Right cardiac atrium (tissue), 5 donors: ENCODE measurements at regions of chr14 and their contacts with region 1.

Region 1: DNA sequence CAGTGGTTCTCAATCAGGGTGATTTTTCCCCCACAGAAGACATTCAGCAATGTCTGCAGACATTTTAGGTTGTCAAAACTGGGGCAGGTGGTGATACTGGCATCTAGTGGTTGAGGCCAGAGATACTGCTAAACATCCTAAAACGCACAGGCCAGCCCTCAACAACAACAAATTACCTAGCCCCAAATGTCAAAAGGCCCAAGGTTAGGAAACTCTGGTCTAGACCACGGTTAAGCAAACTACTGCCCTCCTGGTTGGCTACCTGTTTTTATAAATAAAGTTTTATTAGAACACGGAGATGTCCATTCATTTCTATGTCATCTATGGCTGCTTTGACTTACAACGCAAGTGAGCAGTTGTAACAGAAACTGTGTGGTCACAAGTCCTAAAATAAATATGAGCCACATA is 186.7 kb downstream of the EFCAB11 start:
- DNase-seq: no peak
- ATAC-seq: peak; percentile 47 to 73
- H3K4me3 ChIP-seq: no peak overlapping the region
- H3K27ac ChIP-seq: no peak overlapping the region
- H3K4me1 ChIP-seq: no peaks in the 10 kb centered on the region
- H3K27me3 ChIP-seq: no peaks in the 10 kb centered on the region

Region 2: DNA sequence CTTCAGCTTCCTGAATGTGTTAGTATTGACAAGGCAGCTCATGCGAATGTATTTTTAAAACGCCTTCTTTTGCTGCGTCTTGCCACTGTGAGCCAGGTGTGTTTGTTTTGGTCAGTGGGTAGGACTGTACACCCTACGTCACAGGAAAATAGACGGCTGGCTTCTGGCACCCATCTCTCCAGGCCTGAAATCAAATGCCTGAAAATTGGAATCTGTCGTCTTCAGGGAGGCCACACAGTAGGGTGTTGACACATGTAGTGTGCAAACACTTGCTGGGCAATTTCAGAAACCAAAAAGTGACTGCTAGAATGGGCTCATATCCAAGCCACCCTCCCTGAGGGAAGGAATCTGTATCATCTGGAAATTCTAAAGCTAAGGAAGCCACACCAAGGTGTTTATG is 734.1 kb before region 1 on chr14:
- intact Hi-C with region 1: loop called in 2 of 4 experiments (anchors 10 kb)
- DNase-seq: no peak
- ATAC-seq: peak in 1 of 2 donors; percentile 63
- H3K4me3 ChIP-seq: no peak overlapping the region
- H3K27ac ChIP-seq: no peak overlapping the region
- H3K4me1 ChIP-seq: no peaks in the 10 kb centered on the region
- H3K27me3 ChIP-seq: no peaks in the 10 kb centered on the region

Region 3: DNA sequence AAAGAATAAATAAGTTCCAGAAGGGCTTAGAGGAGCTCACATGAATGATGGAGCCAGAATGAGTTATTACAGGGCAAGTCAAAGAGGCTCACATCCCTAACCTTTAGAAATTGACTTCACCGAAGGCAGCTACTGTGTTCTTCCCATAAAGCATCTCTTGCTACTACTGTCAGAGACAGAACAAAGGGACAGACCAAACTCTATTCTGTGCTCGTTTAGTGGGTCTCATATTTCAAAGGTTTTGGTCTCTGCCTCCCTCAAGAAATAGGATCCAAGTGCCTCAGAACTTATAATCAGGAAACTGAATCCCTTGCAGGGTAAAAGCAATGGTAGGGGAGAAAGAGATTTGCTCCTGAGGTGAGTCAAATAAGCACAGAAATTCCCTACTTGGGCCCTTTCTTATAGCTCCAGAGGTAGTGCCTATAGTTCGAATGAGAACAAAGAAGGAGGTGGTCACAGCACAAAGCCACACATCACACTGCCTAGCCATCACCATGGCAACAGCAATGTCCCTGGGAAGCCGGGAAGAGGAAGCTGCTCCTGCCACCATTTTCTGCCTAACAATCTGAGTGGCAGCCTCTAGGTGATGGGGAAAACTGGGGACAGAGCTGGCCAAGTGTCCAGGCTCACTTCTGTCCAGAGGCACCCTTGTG is 645.8 kb before region 1 on chr14:
- intact Hi-C with region 1: no loop called
- DNase-seq: no peak
- ATAC-seq: no peak
- H3K4me3 ChIP-seq: no peak overlapping the region
- H3K27ac ChIP-seq: no peak overlapping the region
- H3K4me1 ChIP-seq: no peaks in the 10 kb centered on the region
- H3K27me3 ChIP-seq: no peaks in the 10 kb centered on the region

Region 4: GRCh38 chr14:89378119-89378518 is 389.7 kb before region 1 on chr14:
- intact Hi-C with region 1: no loop called
- DNase-seq: peak in 1 of 3 donors; percentile 37
- ATAC-seq: peak; percentile 25 to 63
- H3K4me3 ChIP-seq: no peak overlapping the region
- H3K27ac ChIP-seq: no peak overlapping the region
- H3K4me1 ChIP-seq: peaks cover 2% of the 10 kb centered on the region
- H3K27me3 ChIP-seq: no peaks in the 10 kb centered on the region

Region 5: GRCh38 chr14:89549381-89550125 is 218.3 kb before region 1 on chr14:
- intact Hi-C with region 1: no loop called
- DNase-seq: no peak
- ATAC-seq: no peak
- H3K4me3 ChIP-seq: no peak overlapping the region
- H3K27ac ChIP-seq: no peak overlapping the region
- H3K4me1 ChIP-seq: peaks cover 6% of the 10 kb centered on the region
- H3K27me3 ChIP-seq: no peaks in the 10 kb centered on the region

Region 6: GRCh38 chr14:89965839-89966238 is 198.0 kb after region 1 on chr14:
- intact Hi-C with region 1: no loop called
- DNase-seq: no peak
- ATAC-seq: no peak
- H3K4me3 ChIP-seq: no peak overlapping the region
- H3K27ac ChIP-seq: no peak overlapping the region
- H3K4me1 ChIP-seq: no peaks in the 10 kb centered on the region
- H3K27me3 ChIP-seq: no peaks in the 10 kb centered on the region